ENCODE measurements at regions of chr10 and their contacts with region 1.

Region 1: GRCh38 chr10:89351780-89352597 is 24.2 kb downstream of the IFIT3 start:
- DNase-seq: no peak
- H3K4me3 Mint-ChIP-seq: no peak overlapping the region
- H3K27ac Mint-ChIP-seq: peak overlapping the region; percentile 3
- H3K4me1 Mint-ChIP-seq: peaks cover 18% of the 10 kb centered on the region
- H3K27me3 Mint-ChIP-seq: peaks cover 58% of the 10 kb centered on the region

Region 2: GRCh38 chr10:88791924-88792323 is 560.1 kb before region 1 on chr10:
- intact Hi-C with region 1: no loop called
- DNase-seq: no peak
- H3K4me3 Mint-ChIP-seq: no peak overlapping the region
- H3K27ac Mint-ChIP-seq: no peak overlapping the region
- H3K4me1 Mint-ChIP-seq: peaks cover 24% of the 10 kb centered on the region
- H3K27me3 Mint-ChIP-seq: peaks cover 21% of the 10 kb centered on the region

Region 3: DNA sequence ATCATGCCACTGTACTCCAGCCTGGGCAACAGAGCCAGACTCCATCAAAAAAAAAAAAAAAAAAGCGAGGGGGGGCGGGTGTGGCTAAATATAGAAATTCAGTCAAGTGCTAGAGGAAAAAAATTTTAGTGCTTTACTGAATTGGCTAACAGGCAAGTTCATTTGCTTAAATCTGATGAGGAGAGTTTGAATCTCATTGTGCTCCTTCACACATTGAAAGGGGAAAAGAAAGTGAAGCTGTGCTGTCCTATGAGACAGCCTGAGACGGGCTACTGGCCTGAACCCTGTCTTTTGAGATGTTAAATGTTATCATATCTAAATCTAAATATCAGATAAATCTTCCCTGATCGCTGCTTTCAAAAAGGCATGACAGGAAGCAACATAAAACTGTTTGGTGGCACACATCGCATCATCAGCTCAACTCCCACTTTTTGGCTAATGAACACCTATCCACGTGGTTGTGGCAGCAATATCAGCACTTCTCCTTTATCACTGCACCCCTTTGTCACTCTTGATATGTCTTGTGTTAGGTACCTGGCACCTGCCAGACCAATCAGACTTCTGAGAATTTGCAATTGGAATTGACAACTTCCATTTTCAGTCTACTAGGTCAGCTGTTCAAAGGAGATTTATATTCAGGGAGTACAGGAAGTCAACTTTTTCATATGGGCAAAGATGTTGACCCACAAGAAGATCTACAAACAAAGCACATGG is 11.9 kb after region 1 on chr10:
- intact Hi-C with region 1: loop called (anchors 2 kb)
- DNase-seq: no peak
- H3K4me3 Mint-ChIP-seq: no peak overlapping the region
- H3K27ac Mint-ChIP-seq: no peak overlapping the region
- H3K4me1 Mint-ChIP-seq: peaks cover 8% of the 10 kb centered on the region
- H3K27me3 Mint-ChIP-seq: peaks cover 13% of the 10 kb centered on the region

Region 4: GRCh38 chr10:89391917-89392756 is 40.1 kb after region 1 on chr10 and contains the start of gene IFIT1:
- intact Hi-C with region 1: loop called (anchors 1 kb)
- DNase-seq: peak; percentile 88
- H3K4me3 Mint-ChIP-seq: peak within 1 kb of the TSS; percentile 82
- H3K27ac Mint-ChIP-seq: peak within 1 kb of the TSS; percentile 67
- H3K4me1 Mint-ChIP-seq: peaks cover 31% of the 10 kb centered on the region
- H3K27me3 Mint-ChIP-seq: peaks cover 2% of the 10 kb centered on the region
- total RNA-seq, gene IFIT1: 0.58 and 1.0 TPM in 2 replicates